PC-3 (cell line): ENCODE measurements at regions of chr5 and their contacts with region 1.

Region 1: GRCh38 chr5:34522599-34523386 is 133.3 kb upstream of the RAI14 start:
- DNase-seq: peak; percentile 93
- ATAC-seq: peak; percentile 70
- H3K4me3 ChIP-seq: no peak overlapping the region
- H3K27ac ChIP-seq: peak overlapping the region; percentile 74
- H3K4me1 ChIP-seq: peaks cover 52% of the 10 kb centered on the region
- H3K27me3 ChIP-seq: no peaks in the 10 kb centered on the region
- CTCF ChIP-seq: peak; percentile 88

Region 2: GRCh38 chr5:34474573-34475021 is 48.2 kb before region 1 on chr5:
- CTCF ChIA-PET with region 1: no interaction called
- POLR2A ChIA-PET with region 1: no interaction called
- intact Hi-C with region 1: loop called (anchors 5 kb)
- DNase-seq: peak; percentile 73
- ATAC-seq: peak; percentile 84
- H3K4me3 ChIP-seq: no peak overlapping the region
- H3K27ac ChIP-seq: no peak overlapping the region
- H3K4me1 ChIP-seq: peaks cover 4% of the 10 kb centered on the region; the same call in 1 of the 2 replicates
- H3K27me3 ChIP-seq: no peaks in the 10 kb centered on the region
- CTCF ChIP-seq: peak; percentile 97

Region 3: DNA sequence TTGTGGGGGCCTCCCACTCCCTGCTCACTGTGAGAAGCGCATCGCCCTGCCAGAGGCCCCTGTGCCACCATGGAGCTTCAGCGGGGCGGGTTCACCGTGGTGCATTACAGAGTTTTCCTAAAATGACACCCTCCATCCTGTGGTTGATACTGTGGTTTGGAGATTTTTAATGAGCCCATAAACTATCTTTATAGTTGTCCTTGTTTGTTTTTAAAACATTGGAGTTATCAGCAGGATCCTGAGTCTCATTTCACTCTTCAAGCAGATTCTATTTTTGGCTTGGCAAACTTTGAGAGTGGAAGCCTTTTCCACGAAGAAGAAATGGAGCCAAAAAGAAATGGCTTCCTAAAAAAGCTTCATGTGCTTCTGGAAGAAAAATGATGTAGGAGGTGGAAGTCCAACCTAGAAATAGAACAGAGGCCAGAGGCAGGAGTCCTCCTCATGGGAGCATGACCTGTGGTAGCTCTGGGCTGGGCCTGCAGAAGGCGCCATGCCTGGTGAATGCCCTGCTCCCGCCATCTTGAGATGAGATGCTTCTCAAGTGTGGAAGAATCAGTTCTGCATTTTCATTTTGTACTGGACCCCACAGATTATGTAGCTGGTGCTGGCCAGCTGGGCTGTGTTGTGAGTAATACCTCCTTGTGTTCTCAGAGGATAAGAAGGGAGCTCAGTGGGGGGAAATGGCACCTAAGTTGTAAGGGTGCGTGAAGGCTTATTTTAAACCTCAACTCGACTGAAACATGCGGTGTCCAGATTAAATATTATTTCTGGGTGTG is 54.3 kb after region 1 on chr5:
- CTCF ChIA-PET with region 1: no interaction called
- POLR2A ChIA-PET with region 1: no interaction called
- intact Hi-C with region 1: loop called (anchors 2 kb)
- DNase-seq: peak; percentile 62
- ATAC-seq: peak; percentile 80
- H3K4me3 ChIP-seq: no peak overlapping the region
- H3K27ac ChIP-seq: peak overlapping the region; percentile 70
- H3K4me1 ChIP-seq: peaks cover 12% of the 10 kb centered on the region
- H3K27me3 ChIP-seq: no peaks in the 10 kb centered on the region
- CTCF ChIP-seq: no peak

Region 4: DNA sequence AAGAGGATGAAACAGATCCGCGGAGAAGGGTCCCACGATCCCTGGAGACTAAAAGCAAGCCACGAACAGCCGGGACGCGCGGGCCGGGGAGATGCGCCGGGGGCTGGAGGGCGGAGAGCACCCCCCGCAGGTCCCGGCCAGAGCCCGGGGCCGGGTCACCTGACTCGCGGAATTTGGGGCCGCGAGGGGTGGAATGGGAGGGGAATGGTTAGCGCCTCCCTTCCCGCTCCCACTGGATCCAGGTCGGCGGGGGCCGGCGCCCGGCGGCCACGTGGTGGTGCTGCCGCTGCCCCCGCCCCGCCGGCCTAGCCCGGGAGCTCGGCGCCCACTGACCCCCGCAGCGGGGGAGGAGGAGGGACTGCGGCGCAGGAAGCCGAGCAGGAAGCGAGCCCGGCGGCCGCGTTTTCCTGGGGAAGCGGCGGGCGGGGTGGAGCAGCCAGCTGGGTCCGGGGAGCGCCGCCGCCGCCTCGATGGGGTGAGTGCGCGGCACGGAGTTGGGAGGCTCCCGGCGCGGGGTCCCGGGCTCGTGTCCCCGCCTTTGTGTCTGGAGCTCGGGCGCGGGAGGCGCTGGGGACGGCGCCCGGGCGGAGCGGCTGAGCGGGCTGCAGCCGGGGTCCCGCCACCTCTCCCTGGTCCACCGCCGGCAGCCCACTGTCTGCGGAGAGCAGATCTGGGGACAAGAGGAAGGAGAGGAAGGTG is 133.4 kb after region 1 on chr5 and contains the start of gene RAI14:
- CTCF ChIA-PET with region 1: no interaction called
- POLR2A ChIA-PET with region 1: no interaction called
- intact Hi-C with region 1: loop called (anchors 1 kb)
- DNase-seq: peak; percentile 86
- ATAC-seq: peak; percentile 71
- H3K4me3 ChIP-seq: peak within 1 kb of the TSS; percentile 97
- H3K27ac ChIP-seq: peak within 1 kb of the TSS; percentile 89
- H3K4me1 ChIP-seq: peaks cover 37% of the 10 kb centered on the region
- H3K27me3 ChIP-seq: no peaks in the 10 kb centered on the region
- CTCF ChIP-seq: no peak
- total RNA-seq, gene RAI14: 54.4 and 73.5 TPM in 2 replicates

Region 5: GRCh38 chr5:34717426-34718327 is 194.9 kb after region 1 on chr5:
- CTCF ChIA-PET with region 1: no interaction called
- POLR2A ChIA-PET with region 1: interaction called, 3 read pairs
- intact Hi-C with region 1: loop called (anchors 1 kb)
- DNase-seq: peak; percentile 97
- ATAC-seq: peak; percentile 88
- H3K4me3 ChIP-seq: peak overlapping the region; percentile 48; the same call in 1 of the 2 replicates
- H3K27ac ChIP-seq: peak overlapping the region; percentile 99
- H3K4me1 ChIP-seq: peaks cover 51% of the 10 kb centered on the region
- H3K27me3 ChIP-seq: no peaks in the 10 kb centered on the region
- CTCF ChIP-seq: no peak

Region 6: GRCh38 chr5:34838785-34839714 is 316.3 kb after region 1 on chr5 and contains the start of gene TTC23L:
- CTCF ChIA-PET with region 1: no interaction called
- POLR2A ChIA-PET with region 1: no interaction called
- intact Hi-C with region 1: loop called (anchors 10 kb)
- DNase-seq: peak; percentile 90
- ATAC-seq: peak; percentile 95
- H3K4me3 ChIP-seq: peak within 1 kb of the TSS; percentile 72
- H3K27ac ChIP-seq: peak within 1 kb of the TSS; percentile 11
- H3K4me1 ChIP-seq: peaks cover 4% of the 10 kb centered on the region; the same call in 1 of the 2 replicates
- H3K27me3 ChIP-seq: no peaks in the 10 kb centered on the region
- CTCF ChIP-seq: no peak
- total RNA-seq, gene TTC23L: 0.84 TPM in 1 of 2 replicates, not detected in the other